Vagina (tissue), 2 donors: ENCODE measurements at regions of chr5 and their contacts with region 1.

Region 1: DNA sequence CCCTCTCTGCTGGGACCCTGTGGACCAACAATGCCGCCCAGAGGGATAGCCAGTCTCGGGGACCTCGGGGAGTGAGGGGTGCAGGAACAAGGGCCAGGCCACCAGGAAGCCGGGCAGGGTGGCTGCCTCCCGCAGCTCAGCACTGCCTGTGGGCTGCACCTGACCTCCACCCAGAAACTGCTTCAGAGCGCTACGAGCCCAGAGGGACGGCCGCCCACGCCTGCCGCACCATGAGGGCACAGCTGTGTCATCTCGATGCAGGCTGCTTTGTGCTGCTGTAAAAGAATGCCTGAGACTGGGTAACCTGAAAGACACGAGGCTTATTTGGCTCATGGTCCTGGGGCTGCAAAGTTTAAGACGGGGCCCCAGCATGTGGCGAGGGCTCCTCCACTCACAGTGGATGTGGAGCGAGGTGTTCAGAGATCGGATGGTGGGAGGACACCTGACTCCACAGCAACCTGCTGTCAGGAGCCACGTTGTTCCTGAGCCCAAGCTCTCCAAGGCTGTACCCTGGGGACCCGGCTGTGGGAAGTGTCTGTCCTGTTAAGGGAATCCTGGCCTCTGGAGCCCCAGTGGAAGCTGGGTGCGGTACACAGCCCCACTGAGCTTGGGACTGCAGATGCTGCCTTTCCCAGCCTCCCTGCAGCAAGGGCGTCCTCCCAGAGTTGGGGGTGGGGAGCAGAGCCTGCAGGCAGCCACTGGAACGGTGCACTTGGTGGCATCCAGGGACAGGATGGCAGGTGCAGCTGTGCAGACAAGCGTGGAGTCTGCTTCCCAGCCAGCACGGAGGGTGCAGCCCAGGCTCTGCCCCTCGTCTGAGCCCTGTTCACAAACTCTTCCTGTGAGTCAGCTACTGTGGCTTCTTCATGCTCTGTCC is 11.8 kb upstream of the ZDHHC11 start:
- DNase-seq: no peak
- H3K4me3 ChIP-seq: no peak overlapping the region
- H3K27ac ChIP-seq: no peak overlapping the region
- H3K4me1 ChIP-seq: peaks cover 21% of the 10 kb centered on the region
- H3K27me3 ChIP-seq: no peaks in the 10 kb centered on the region
- CTCF ChIP-seq: no peak
- POLR2A ChIP-seq: no peak

Region 2: GRCh38 chr5:446864-447263 is 415.7 kb before region 1 on chr5:
- intact Hi-C with region 1: loop called (anchors 5 kb)
- DNase-seq: no peak
- H3K4me3 ChIP-seq: no peak overlapping the region
- H3K27ac ChIP-seq: no peak overlapping the region
- H3K4me1 ChIP-seq: peaks cover 24% of the 10 kb centered on the region
- H3K27me3 ChIP-seq: no peaks in the 10 kb centered on the region
- CTCF ChIP-seq: peak in 1 of 3 experiments; percentile 11
- POLR2A ChIP-seq: no peak

Region 3: GRCh38 chr5:1182633-1183423 is 320.2 kb after region 1 on chr5:
- intact Hi-C with region 1: no loop called
- DNase-seq: no peak
- H3K4me3 ChIP-seq: no peak overlapping the region
- H3K27ac ChIP-seq: no peak overlapping the region
- H3K4me1 ChIP-seq: no peaks in the 10 kb centered on the region
- H3K27me3 ChIP-seq: no peaks in the 10 kb centered on the region
- CTCF ChIP-seq: no peak
- POLR2A ChIP-seq: no peak